K562 (cell line): ENCODE measurements at regions of chr10 and their contacts with region 1.

Region 1: GRCh38 chr10:73246783-73247508 is at the start of gene DNAJC9:
- DNase-seq: peak; percentile 93 to 99 (median 94)
- ATAC-seq: peak; percentile 87
- H3K4me3 ChIP-seq: peak within 1 kb of the TSS; percentile 65
- H3K27ac ChIP-seq: peak within 1 kb of the TSS; percentile 95
- H3K4me1 ChIP-seq: peaks cover 7 to 43% of the 10 kb centered on the region in 2 experiments
- H3K27me3 ChIP-seq: no peaks in the 10 kb centered on the region
- CTCF ChIP-seq: peak in 1 of 3 experiments; percentile 15; a peak in 3 of 6 replicates
- EP300 ChIP-seq: peak; percentile 46
- POLR2A ChIP-seq: peak; percentile 99
- RAD21 ChIP-seq: peak in 1 of 2 experiments; percentile 3; a peak in 3 of 4 replicates
- polyA plus RNA-seq, gene DNAJC9: 66.7 to 80.2 TPM

Region 2: DNA sequence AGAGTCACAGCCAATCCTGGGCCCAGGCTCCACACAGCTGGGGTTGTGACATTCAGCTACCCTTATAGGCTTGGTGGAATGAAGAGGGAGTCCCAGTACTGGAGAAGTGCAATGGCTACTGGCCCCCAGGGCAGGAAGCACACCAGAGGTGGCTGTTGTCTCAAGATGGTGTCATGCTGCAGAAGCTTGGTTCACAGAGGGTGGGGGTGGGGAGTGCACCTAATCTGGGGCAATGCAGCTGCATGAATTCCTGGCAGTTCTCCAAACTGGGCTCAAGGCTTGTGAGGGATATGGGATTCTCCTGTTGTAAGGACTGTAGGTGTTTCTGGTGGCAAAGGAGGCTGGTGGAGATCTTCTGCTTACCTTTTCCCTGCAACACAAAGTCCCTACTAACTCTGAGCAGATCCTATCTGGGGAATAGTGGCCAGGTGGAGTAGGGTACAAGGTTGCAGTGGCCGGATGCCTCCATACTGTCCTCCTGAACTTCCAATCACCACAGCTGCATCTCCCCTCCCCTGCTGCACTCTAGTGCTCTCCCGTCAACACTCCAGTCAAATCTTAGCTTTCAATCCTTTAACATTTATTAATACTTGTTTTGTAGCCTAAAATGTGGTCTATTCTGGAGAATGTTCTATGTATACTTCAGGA is 264.9 kb before region 1 on chr10:
- CTCF ChIA-PET with region 1: no interaction called
- POLR2A ChIA-PET with region 1: no interaction called
- in situ Hi-C with region 1: no loop called
- intact Hi-C with region 1: no loop called
- DNase-seq: peak in 2 of 4 experiments; percentile 59 to 86
- ATAC-seq: peak; percentile 95
- H3K4me3 ChIP-seq: no peak overlapping the region
- H3K27ac ChIP-seq: peak overlapping the region; percentile 54; the same call in 2 of the 3 replicates
- H3K4me1 ChIP-seq: peaks cover 8 to 9% of the 10 kb centered on the region in 2 experiments; a peak in 3 of 5 replicates
- H3K27me3 ChIP-seq: no peaks in the 10 kb centered on the region
- CTCF ChIP-seq: no peak
- EP300 ChIP-seq: peak; percentile 60
- POLR2A ChIP-seq: no peak
- RAD21 ChIP-seq: no peak

Region 3: DNA sequence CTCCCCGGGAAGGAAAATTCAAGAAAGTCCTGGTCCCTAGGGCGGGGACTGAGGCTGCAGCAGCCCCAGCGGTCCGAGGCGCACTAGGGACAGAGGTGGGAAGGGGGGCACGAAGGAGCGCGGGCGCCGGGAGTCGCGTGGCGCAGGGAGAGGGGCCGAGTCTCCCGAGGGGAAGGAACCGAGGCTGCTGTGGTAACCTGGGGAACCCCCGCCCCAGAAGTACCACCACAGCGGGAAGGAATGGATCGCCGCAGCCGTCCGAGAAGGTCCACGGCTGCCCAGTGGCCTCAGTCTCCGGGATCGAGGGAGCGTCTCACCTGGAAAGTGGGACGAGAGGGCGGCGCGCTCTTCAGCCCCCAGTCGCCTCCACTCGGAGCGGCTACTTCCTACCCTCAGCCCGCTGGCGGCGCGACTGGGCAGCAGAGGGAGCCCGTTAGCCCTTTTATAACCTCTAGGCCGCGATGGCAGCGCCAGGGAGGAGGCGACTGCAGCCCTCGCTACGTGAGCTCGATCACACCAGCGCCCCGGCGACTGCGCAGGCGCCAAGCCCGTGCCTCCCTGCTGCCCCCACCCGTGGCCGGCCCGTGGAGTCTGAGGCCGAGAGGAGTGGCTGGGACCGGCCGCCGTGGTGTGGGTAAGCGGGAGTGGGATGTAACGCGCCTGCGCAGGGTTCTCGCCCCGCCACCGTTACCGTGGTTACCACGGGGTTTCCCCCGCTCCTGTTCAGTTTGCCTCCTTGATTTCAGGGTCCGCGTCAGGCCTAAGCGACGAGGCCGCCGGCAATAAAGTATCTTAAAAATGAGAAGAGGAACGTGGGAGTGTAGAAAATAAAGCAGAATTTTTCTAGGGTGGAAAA is 150.3 kb before region 1 on chr10 and contains the start of gene P4HA1:
- CTCF ChIA-PET with region 1: no interaction called
- POLR2A ChIA-PET with region 1: interaction called, 18 read pairs
- in situ Hi-C with region 1: no loop called
- intact Hi-C with region 1: loop called (anchors 5 kb)
- DNase-seq: peak; percentile 99
- ATAC-seq: peak; percentile 95
- H3K4me3 ChIP-seq: peak within 1 kb of the TSS; percentile 74
- H3K27ac ChIP-seq: peak within 1 kb of the TSS; percentile 90
- H3K4me1 ChIP-seq: peaks cover 9 to 12% of the 10 kb centered on the region in 2 experiments; a peak in 3 of 5 replicates
- H3K27me3 ChIP-seq: no peaks in the 10 kb centered on the region
- CTCF ChIP-seq: peak; percentile 91 to 97 (median 96)
- EP300 ChIP-seq: peak; percentile 34; the same call in 1 of the 2 replicates
- POLR2A ChIP-seq: peak; percentile 98
- RAD21 ChIP-seq: peak; percentile 78 to 90
- polyA plus RNA-seq, gene P4HA1: 21.0 to 28.6 TPM

Region 4: DNA sequence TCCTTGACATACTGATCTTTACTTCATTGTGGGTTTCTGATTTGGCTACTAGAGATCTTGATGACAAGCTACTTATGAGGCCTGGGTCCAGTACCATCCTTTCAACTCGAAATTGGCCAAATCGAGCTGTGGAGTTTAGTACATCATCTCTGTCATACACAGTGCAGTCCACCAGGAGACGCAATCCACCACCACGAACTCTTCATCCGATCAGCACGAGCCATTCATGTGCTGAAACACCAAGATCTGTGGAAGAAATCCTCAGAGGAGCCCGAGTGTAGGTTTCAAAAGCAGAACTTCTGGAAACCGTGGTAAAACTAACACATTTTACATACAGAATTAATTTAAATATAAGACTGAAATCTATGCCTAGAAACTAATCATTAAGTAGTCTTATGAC is 14.1 kb before region 1 on chr10:
- CTCF ChIA-PET with region 1: no interaction called
- POLR2A ChIA-PET with region 1: interaction called, 66 read pairs
- in situ Hi-C with region 1: no loop called
- intact Hi-C with region 1: no loop called
- DNase-seq: peak; percentile 55 to 73 (median 60)
- ATAC-seq: peak; percentile 85
- H3K4me3 ChIP-seq: no peak overlapping the region
- H3K27ac ChIP-seq: no peak overlapping the region
- H3K4me1 ChIP-seq: no peaks in the 10 kb centered on the region; a peak in 1 of 5 replicates
- H3K27me3 ChIP-seq: no peaks in the 10 kb centered on the region
- CTCF ChIP-seq: peak; percentile 67 to 83 (median 81)
- EP300 ChIP-seq: no peak
- POLR2A ChIP-seq: no peak
- RAD21 ChIP-seq: peak; percentile 71 to 85

Region 5: GRCh38 chr10:73413528-73414229 is 166.7 kb after region 1 on chr10 and contains the start of gene ANXA7:
- CTCF ChIA-PET with region 1: no interaction called
- POLR2A ChIA-PET with region 1: interaction called, 8 read pairs
- in situ Hi-C with region 1: no loop called
- intact Hi-C with region 1: loop called (anchors 5 kb)
- DNase-seq: peak; percentile 97 to 100 (median 100)
- ATAC-seq: peak; percentile 99
- H3K4me3 ChIP-seq: peak within 1 kb of the TSS; percentile 89
- H3K27ac ChIP-seq: peak within 1 kb of the TSS; percentile 95
- H3K4me1 ChIP-seq: peaks cover 9 to 11% of the 10 kb centered on the region in 2 experiments; a peak in 4 of 5 replicates
- H3K27me3 ChIP-seq: no peaks in the 10 kb centered on the region
- CTCF ChIP-seq: peak; percentile 45 to 73 (median 63); a peak in 5 of 6 replicates
- EP300 ChIP-seq: no peak
- POLR2A ChIP-seq: peak; percentile 97
- RAD21 ChIP-seq: 0 out of 4 replicates have a peak, but pooled peaks of 1 of the 2 experiments have one; percentile 3
- polyA plus RNA-seq, gene ANXA7: 86.4 to 122 TPM

Region 6: DNA sequence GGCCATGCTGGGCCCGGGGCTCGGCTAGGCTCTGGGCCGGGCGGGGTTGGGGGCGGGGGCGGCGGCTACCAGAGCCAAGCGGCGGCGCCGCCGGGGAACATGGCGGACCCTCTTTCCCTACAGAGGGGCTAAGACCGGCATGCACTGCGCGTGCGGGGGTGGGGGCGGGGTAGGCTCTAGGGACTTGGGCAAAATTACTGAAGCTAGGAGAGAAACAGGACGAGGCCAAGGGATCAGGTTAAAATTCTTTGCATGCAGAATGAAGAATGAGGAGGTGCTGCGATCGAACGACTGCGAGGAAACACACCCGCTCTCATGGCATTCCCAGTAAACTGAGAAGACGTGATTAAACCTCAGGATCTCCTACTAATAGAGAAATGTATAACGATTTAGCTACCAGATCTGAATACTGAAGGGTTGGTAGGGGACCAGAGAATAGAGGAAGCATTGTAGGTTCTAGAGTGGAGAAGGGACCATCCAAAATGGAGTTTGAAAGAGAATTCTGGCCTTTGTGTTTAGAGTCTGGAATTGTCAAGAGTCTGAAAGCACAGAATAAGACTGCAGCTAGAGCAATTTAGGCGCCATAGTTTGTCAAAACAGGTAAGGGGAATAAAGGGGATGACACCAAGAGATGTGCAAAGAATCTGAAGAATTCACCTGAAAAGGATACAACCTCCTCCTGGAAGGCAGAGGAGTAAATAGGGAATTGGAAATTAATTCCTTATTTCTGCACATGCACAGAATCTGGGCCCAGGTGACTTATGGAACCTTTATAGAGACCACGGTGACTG is 249.1 kb after region 1 on chr10 and contains the start of gene PPP3CB:
- CTCF ChIA-PET with region 1: no interaction called
- POLR2A ChIA-PET with region 1: interaction called, 4 read pairs
- in situ Hi-C with region 1: no loop called
- intact Hi-C with region 1: loop called (anchors 5 kb)
- DNase-seq: peak in 3 of 4 experiments; percentile 97 to 99 (median 97)
- ATAC-seq: peak; percentile 90
- H3K4me3 ChIP-seq: peak within 1 kb of the TSS; percentile 96
- H3K27ac ChIP-seq: peak within 1 kb of the TSS; percentile 96
- H3K4me1 ChIP-seq: peaks cover 12 to 18% of the 10 kb centered on the region in 2 experiments
- H3K27me3 ChIP-seq: no peaks in the 10 kb centered on the region
- CTCF ChIP-seq: no peak
- EP300 ChIP-seq: peak; percentile 65
- POLR2A ChIP-seq: no peak
- RAD21 ChIP-seq: no peak
- polyA plus RNA-seq, gene PPP3CB: 10.8 to 13.7 TPM